ENCODE measurements at regions of chr1 and their contacts with region 1.

Region 1: DNA sequence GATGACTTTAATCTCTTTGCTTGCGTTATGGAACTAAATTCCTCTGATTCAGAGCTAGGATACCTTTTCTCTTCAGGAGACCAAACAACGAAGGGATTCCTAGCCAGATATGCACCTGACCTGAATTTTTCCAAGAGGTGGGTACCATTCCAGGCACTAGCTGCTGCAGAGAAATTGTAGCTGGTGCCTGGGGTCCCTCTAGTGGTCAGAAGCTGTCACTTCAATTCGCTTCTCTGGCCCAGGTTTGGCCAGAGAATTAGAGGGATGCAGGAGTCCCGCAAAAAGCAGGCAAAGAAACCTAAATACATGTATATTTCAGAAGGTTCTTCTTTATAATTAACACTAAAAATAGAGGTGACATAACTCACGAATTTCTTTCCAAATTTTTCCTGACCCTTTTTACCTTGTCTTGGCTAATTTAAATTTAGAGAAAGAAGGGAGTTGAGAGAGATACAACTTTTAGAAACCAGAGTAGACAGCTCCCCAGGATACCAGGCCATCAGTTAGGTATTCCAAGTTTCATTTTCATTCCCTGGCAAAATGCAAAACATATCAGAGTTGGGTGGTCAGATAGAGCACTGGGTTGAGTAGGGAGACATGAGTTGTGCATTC is 9.6 kb downstream of the ACKR1 start:
- DNase-seq: peak; percentile 40 to 59
- ATAC-seq: peak; percentile 67 to 90; a peak in 5 of 6 replicates
- H3K4me3 ChIP-seq: no peak overlapping the region
- H3K27ac ChIP-seq: no peak overlapping the region
- H3K4me1 ChIP-seq: peaks cover 13% of the 10 kb centered on the region; the same call in 1 of the 3 replicates
- CTCF ChIP-seq: peak; percentile 77
- EP300 ChIP-seq: no peak
- POLR2A ChIP-seq: no peak
- RAD21 ChIP-seq: peak; percentile 67 to 71

Region 2: DNA sequence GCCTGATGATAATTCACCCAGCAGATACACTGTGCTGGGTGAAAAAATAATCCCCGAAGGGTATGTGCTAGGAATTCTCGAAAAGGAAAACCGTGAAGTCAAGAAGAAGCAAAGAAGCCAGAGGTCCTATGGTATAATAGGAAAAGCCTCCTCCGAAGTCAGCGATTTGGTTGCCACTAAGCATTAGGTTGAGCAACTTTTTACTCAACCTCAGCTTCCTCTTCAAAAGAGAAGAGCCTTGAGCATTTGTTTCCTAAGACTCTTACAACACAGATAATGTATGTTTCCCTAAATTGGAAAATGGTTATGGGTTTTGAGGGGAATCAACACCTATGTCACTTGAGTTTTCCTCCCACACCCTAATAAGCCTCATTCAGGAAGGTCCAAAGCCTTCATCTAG is 404.4 kb before region 1 on chr1:
- CTCF ChIA-PET with region 1: no interaction called
- POLR2A ChIA-PET with region 1: no interaction called
- DNase-seq: no peak
- ATAC-seq: no peak
- H3K4me3 ChIP-seq: no peak overlapping the region
- H3K27ac ChIP-seq: no peak overlapping the region
- H3K4me1 ChIP-seq: no peaks in the 10 kb centered on the region
- CTCF ChIP-seq: no peak
- EP300 ChIP-seq: no peak
- POLR2A ChIP-seq: no peak
- RAD21 ChIP-seq: no peak

Region 3: GRCh38 chr1:159132271-159132881 is 81.9 kb before region 1 on chr1:
- CTCF ChIA-PET with region 1: interaction called, 70 read pairs
- POLR2A ChIA-PET with region 1: no interaction called
- DNase-seq: peak; percentile 59 to 61
- ATAC-seq: peak; percentile 68 to 81; a peak in 3 of 6 replicates
- H3K4me3 ChIP-seq: no peak overlapping the region
- H3K27ac ChIP-seq: no peak overlapping the region
- H3K4me1 ChIP-seq: no peaks in the 10 kb centered on the region
- CTCF ChIP-seq: peak; percentile 88
- EP300 ChIP-seq: no peak
- POLR2A ChIP-seq: no peak
- RAD21 ChIP-seq: peak; percentile 84 to 85

Region 4: DNA sequence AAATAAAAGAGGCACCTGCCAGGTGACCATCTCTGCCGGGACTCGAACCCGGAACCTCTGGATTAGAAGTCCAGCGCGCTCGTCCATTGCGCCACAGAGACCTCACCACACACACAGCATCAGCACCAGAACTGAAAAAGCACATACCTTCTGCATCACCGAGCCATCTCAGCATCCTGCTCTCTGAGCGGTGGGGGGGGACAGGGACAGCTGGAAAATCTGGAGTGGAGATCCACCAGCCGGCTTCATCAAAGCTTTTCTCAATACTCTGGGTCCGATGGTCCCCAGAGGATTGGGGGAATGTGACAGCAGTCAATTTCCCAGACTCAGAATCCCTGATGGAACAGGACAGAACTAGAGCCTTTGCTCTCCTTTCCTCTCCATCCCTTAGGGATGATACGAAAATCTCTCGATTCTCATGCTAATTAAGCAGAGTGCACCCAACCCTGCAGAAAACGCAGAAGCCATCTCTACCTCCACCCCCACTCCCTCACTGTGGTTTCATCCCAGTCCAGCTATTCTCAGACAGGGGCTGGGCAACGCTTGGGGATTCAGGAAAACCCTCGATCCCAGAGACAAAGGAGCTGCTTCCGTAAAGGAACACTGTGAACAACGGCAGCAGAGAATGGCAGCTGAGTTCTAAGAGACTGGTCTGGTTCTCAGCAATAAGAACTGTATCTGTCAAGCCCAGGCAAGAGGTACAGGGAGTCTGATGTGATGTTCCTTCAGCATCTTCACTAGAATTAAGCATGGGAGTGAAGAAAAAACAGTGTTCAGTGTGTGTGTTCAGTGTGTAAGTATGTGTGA is 72.5 kb before region 1 on chr1:
- CTCF ChIA-PET with region 1: interaction called, 12 read pairs
- POLR2A ChIA-PET with region 1: no interaction called
- DNase-seq: peak in 1 of 2 experiments; percentile 19
- ATAC-seq: peak; percentile 49 to 56; a peak in 5 of 6 replicates
- H3K4me3 ChIP-seq: peak overlapping the region; percentile 38
- H3K27ac ChIP-seq: no peak overlapping the region
- H3K4me1 ChIP-seq: no peaks in the 10 kb centered on the region
- CTCF ChIP-seq: no peak
- EP300 ChIP-seq: no peak
- POLR2A ChIP-seq: no peak
- RAD21 ChIP-seq: no peak

Region 5: GRCh38 chr1:159161001-159161718 is 53.1 kb before region 1 on chr1:
- CTCF ChIA-PET with region 1: interaction called, 106 read pairs
- POLR2A ChIA-PET with region 1: no interaction called
- DNase-seq: peak; percentile 61 to 77
- ATAC-seq: peak; percentile 98 to 100
- H3K4me3 ChIP-seq: no peak overlapping the region
- H3K27ac ChIP-seq: 0 out of 6 replicates have a peak overlapping the region, but pooled peaks of 1 of the 2 experiments have one; percentile 31
- H3K4me1 ChIP-seq: peaks cover 8% of the 10 kb centered on the region
- CTCF ChIP-seq: peak; percentile 100
- EP300 ChIP-seq: no peak
- POLR2A ChIP-seq: no peak
- RAD21 ChIP-seq: peak; percentile 99 to 100

Region 6: GRCh38 chr1:159197561-159198557 is 16.4 kb before region 1 on chr1:
- CTCF ChIA-PET with region 1: interaction called, 186 read pairs
- POLR2A ChIA-PET with region 1: no interaction called
- DNase-seq: peak; percentile 57 to 75
- ATAC-seq: peak; percentile 84 to 95
- H3K4me3 ChIP-seq: no peak overlapping the region
- H3K27ac ChIP-seq: no peak overlapping the region
- H3K4me1 ChIP-seq: no peaks in the 10 kb centered on the region
- CTCF ChIP-seq: peak; percentile 73
- EP300 ChIP-seq: no peak
- POLR2A ChIP-seq: no peak
- RAD21 ChIP-seq: peak; percentile 54 to 58

Region 7: DNA sequence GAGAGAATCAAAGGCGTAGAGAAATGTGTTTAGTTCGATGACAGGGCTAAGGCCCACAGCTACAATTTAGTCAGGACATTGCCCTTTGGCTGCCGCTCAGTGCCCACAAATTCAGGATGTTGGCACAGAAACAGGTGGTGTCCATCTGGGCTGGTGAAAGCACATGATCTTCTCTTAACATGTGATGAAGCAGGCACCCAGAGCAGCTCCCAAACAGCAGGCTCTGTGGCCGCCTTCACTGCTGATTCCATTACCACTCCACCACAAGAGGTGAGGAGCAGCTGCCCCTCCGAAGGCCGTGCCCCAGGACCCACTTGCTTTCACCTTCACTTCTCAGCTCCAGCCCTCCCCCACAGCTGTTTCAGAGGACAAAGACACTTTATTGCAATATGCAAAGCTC is 15.2 kb after region 1 on chr1:
- CTCF ChIA-PET with region 1: interaction called, 148 read pairs
- POLR2A ChIA-PET with region 1: no interaction called
- DNase-seq: peak in 1 of 2 experiments; percentile 7
- ATAC-seq: peak in 1 of 2 experiments; percentile 35; a peak in 2 of 6 replicates
- H3K4me3 ChIP-seq: no peak overlapping the region
- H3K27ac ChIP-seq: peak overlapping the region; percentile 29 to 64; a peak in 4 of 6 replicates
- H3K4me1 ChIP-seq: peaks cover 23% of the 10 kb centered on the region
- CTCF ChIP-seq: no peak
- EP300 ChIP-seq: no peak
- POLR2A ChIP-seq: no peak
- RAD21 ChIP-seq: no peak

Region 8: GRCh38 chr1:159510229-159510541 is 295.9 kb after region 1 on chr1:
- CTCF ChIA-PET with region 1: no interaction called
- POLR2A ChIA-PET with region 1: no interaction called
- DNase-seq: no peak
- ATAC-seq: no peak; a peak in 1 of 6 replicates
- H3K4me3 ChIP-seq: no peak overlapping the region
- H3K27ac ChIP-seq: peak overlapping the region in 1 of 2 experiments; percentile 11; a peak in 2 of 6 replicates
- H3K4me1 ChIP-seq: no peaks in the 10 kb centered on the region; the same call in 2 of the 3 replicates
- CTCF ChIP-seq: no peak
- EP300 ChIP-seq: no peak
- POLR2A ChIP-seq: no peak
- RAD21 ChIP-seq: no peak

Region 9: GRCh38 chr1:159775716-159776115 is 561.5 kb after region 1 on chr1:
- CTCF ChIA-PET with region 1: interaction called, 10 read pairs
- POLR2A ChIA-PET with region 1: no interaction called
- DNase-seq: no peak
- ATAC-seq: no peak
- H3K4me3 ChIP-seq: no peak overlapping the region
- H3K27ac ChIP-seq: no peak overlapping the region
- H3K4me1 ChIP-seq: peaks cover 6% of the 10 kb centered on the region; the same call in 2 of the 3 replicates
- CTCF ChIP-seq: peak; percentile 41; the same call in 2 of the 3 replicates
- EP300 ChIP-seq: no peak
- POLR2A ChIP-seq: no peak
- RAD21 ChIP-seq: peak; percentile 51 to 60